AG04450 (cell line): ENCODE measurements at regions of chr7 and their contacts with region 1.

Region 1: DNA sequence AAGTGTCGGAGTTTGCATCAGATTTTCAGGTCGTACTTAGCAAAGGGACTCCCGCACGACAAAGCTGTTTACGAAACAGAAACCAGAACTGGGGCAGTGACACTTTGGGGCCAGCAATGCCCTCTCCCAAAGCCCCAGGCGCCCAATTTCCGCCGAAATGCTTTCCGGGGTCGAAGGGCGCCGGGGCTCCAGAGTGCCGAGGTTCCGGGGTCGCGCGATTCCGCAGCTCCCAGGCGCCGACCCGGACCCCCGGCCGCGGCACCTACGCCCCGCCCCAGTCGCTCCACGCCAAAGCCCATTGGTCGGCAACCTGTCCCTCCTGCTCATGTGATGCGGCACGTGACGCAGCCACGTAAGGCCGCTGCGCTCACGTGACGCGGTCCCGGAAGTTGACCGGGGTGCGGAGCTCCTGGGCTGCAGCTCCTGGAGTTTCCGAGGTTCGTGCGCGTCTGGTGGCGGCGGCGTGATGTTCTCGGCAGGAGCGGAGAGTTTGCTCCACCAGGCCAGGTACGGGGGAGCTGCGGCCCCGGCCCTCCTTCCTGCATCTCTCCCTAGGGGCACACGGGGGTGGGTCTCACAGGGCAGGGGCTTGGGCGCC is at the start of gene AP5Z1:
- DNase-seq: peak; percentile 92
- H3K4me3 ChIP-seq: peak within 1 kb of the TSS; percentile 98
- H3K27ac ChIP-seq: peak within 1 kb of the TSS; percentile 93
- H3K27me3 ChIP-seq: no peaks in the 10 kb centered on the region
- CTCF ChIP-seq: no peak
- polyA plus RNA-seq, gene AP5Z1: 12.6 and 18.9 TPM in 2 replicates

Region 2: DNA sequence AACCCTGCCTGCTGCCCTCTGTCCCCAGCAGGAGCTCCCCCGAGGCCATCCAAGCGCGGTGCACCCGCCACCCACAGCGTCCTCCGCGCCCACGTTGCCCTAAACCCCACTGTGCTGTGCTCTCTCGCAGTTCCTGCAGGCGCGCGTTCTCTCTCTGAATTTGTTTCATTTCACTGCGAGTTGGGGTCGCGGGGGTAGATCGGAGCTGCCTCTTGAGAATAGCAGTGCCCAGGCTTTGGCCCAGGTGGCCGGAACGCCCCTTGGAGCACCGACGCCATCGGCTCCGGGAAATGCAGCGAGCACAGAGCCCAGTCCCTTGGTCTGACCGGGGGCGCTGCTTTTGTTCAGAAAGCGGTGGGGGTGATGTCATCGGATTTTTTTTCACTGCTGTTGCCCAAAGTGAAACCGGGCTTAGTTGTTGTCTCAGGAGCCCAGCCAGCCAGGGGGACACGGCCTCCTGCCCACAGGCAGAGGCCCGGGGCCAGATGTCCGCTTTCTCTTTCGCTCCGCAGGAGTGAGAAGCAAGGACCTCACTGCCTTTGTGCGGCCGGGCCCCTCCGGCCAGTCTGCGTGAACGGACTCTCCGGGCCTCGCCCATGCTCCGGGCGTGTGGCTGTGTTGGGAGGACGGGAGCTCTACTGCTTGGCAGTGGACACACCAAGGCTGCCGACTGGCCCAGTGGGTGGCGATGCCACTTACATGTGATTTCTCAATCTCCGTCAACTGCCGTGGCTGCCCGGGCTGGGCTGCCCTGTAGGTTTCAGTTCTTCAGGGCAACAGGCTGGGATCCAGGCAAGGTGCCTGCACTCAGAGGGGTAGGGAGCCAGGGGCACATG is 50.1 kb before region 1 on chr7:
- CTCF ChIA-PET with region 1: no interaction called
- POLR2A ChIA-PET with region 1: interaction called, 13 read pairs
- DNase-seq: peak; percentile 80
- H3K4me3 ChIP-seq: peak overlapping the region; percentile 62
- H3K27ac ChIP-seq: peak overlapping the region; percentile 98
- H3K27me3 ChIP-seq: no peaks in the 10 kb centered on the region
- CTCF ChIP-seq: no peak

Region 3: GRCh38 chr7:4744391-4745264 is 30.7 kb before region 1 on chr7:
- CTCF ChIA-PET with region 1: no interaction called
- POLR2A ChIA-PET with region 1: interaction called, 25 read pairs
- DNase-seq: peak; percentile 99
- H3K4me3 ChIP-seq: peak overlapping the region; percentile 41
- H3K27ac ChIP-seq: peak overlapping the region; percentile 99
- H3K27me3 ChIP-seq: no peaks in the 10 kb centered on the region
- CTCF ChIP-seq: no peak